ENCODE measurements at regions of chr17 and their contacts with region 1.

Region 1: DNA sequence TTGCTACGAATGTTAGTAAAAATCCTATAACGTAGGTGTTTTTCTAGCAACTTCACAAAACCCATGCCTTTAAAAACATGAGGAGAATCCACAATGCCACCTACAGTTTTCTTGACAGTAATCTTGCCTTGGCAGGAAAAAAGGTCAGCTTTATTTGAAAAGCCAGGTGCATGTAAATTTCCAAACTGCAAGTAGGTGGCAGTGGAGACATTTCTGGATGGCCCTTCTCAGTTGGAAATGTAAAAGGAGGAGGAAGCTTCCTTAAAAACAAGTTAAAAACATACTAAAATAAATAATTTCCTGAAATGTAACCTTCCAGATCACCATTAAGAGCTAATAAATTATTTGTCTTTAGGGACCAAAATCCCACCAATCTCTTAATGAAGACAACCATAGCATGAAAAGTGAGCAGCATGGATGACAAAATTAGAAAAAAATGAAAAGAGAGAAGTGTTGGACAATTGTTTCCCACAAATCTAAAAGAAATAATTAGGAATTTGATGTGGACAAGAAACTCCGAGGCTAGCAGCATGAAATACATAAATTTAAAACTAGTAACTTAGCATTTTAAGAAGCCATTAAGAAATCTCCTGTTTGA is 152.2 kb downstream of the SNX11 start:
- DNase-seq: peak in 1 of 2 donors; percentile 34
- ATAC-seq: no peak
- H3K4me3 ChIP-seq: no peak overlapping the region
- H3K4me3 Mint-ChIP-seq: no peak overlapping the region
- H3K27ac ChIP-seq: no peak overlapping the region
- H3K27ac Mint-ChIP-seq: peak overlapping the region; percentile 31 to 59
- H3K4me1 ChIP-seq: peaks cover 2% of the 10 kb centered on the region
- H3K4me1 Mint-ChIP-seq: peaks cover 20 to 47% of the 10 kb centered on the region in 2 donors
- H3K27me3 ChIP-seq: no peaks in the 10 kb centered on the region
- H3K27me3 Mint-ChIP-seq: no peaks in the 10 kb centered on the region
- CTCF ChIP-seq: peak; percentile 18

Region 2: GRCh38 chr17:48285614-48286013 is 25.8 kb after region 1 on chr17:
- intact Hi-C with region 1: loop called (anchors 5 kb)
- DNase-seq: no peak
- ATAC-seq: no peak
- H3K4me3 ChIP-seq: no peak overlapping the region
- H3K4me3 Mint-ChIP-seq: no peak overlapping the region
- H3K27ac ChIP-seq: no peak overlapping the region
- H3K27ac Mint-ChIP-seq: peak overlapping the region in 1 of 2 donors; percentile 24
- H3K4me1 ChIP-seq: no peaks in the 10 kb centered on the region
- H3K4me1 Mint-ChIP-seq: peaks cover 25 to 33% of the 10 kb centered on the region in 2 donors
- H3K27me3 ChIP-seq: no peaks in the 10 kb centered on the region
- H3K27me3 Mint-ChIP-seq: no peaks in the 10 kb centered on the region
- CTCF ChIP-seq: no peak